Caco-2 (cell line): ENCODE measurements at regions of chr16 and their contacts with region 1.

Region 1: DNA sequence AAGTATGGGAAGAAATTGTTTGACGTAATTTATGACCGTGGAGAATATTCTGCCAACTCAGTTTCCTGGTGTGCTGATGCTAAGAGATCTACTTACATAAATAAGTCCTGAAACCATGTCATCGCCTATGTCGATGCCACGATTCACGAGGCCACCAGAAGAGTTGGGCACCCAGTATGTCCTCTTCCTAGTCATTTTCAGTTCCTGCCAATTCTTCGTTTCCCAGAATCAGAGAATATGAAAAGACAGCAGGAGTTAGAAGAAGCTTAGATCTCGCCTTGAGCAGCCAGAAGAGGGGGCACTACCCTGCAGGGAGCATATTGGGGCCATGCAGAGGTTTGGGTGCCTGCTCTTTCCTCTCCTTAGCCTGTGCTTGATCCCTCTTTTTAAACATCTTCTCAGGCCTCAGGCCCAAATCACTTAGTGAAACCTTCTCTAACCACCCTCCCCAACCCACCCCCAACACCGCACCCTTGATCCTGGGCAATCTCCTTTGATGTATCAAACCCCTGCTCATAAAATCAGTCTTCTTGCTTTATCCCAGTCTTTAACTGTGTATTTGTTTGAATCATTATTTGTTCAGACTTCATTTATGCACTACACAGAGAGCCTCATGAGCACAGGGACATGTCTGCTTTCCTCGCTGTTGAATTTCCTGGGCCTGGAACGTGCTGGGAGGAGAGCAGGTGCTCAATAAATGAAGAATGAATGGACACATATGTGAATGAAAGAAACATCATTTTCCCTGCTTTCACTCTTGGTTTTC is 12.2 kb upstream of the LONP2 start:
- DNase-seq: peak; percentile 44 to 48
- H3K4me3 ChIP-seq: no peak overlapping the region
- H3K4me3 Mint-ChIP-seq: no peak overlapping the region
- H3K27ac Mint-ChIP-seq: no peak overlapping the region
- H3K4me1 ChIP-seq: peaks cover 10% of the 10 kb centered on the region; the same call in 1 of the 2 replicates
- H3K4me1 Mint-ChIP-seq: peaks cover 30% of the 10 kb centered on the region
- H3K27me3 ChIP-seq: no peaks in the 10 kb centered on the region; the same call in 1 of the 2 replicates
- H3K27me3 Mint-ChIP-seq: peaks cover 3% of the 10 kb centered on the region
- CTCF ChIP-seq: peak; percentile 34 to 75

Region 2: DNA sequence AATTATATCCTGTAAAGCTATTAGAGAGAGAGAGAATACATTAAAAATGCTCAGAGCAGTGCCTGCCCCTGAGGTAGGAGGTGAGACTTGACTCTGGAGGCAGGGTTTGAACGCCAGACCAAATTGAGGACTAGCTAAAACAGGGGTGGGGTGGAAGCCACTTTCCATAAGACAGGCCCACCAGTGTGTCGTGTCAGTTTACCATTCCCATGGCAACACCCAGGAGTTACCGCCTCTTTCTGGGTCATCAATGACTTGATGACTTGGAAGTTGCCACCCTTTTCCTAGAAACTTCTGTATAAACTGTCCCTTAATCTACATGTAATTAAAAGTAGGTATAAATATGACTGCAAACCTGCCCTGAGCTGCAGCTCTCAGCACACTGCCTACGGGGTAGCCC is 44.1 kb before region 1 on chr16:
- CTCF ChIA-PET with region 1: interaction called, 10 read pairs
- POLR2A ChIA-PET with region 1: no interaction called
- intact Hi-C with region 1: no loop called
- DNase-seq: no peak
- H3K4me3 ChIP-seq: no peak overlapping the region
- H3K4me3 Mint-ChIP-seq: no peak overlapping the region
- H3K27ac Mint-ChIP-seq: no peak overlapping the region
- H3K4me1 ChIP-seq: no peaks in the 10 kb centered on the region
- H3K4me1 Mint-ChIP-seq: peaks cover 8% of the 10 kb centered on the region
- H3K27me3 ChIP-seq: no peaks in the 10 kb centered on the region
- H3K27me3 Mint-ChIP-seq: peaks cover 4% of the 10 kb centered on the region
- CTCF ChIP-seq: no peak

Region 3: GRCh38 chr16:48203974-48204824 is 27.7 kb before region 1 on chr16:
- CTCF ChIA-PET with region 1: no interaction called
- POLR2A ChIA-PET with region 1: no interaction called
- intact Hi-C with region 1: loop called (anchors 1 kb)
- DNase-seq: peak; percentile 69 to 78
- H3K4me3 ChIP-seq: no peak overlapping the region
- H3K4me3 Mint-ChIP-seq: peak overlapping the region; percentile 53
- H3K27ac Mint-ChIP-seq: peak overlapping the region; percentile 71
- H3K4me1 ChIP-seq: peaks cover 21% of the 10 kb centered on the region
- H3K4me1 Mint-ChIP-seq: peaks cover 19% of the 10 kb centered on the region
- H3K27me3 ChIP-seq: no peaks in the 10 kb centered on the region
- H3K27me3 Mint-ChIP-seq: no peaks in the 10 kb centered on the region
- CTCF ChIP-seq: no peak